Left ventricle myocardium inferior (tissue), 1 donor: ENCODE measurements at regions of chr6 and their contacts with region 1.

Region 1: DNA sequence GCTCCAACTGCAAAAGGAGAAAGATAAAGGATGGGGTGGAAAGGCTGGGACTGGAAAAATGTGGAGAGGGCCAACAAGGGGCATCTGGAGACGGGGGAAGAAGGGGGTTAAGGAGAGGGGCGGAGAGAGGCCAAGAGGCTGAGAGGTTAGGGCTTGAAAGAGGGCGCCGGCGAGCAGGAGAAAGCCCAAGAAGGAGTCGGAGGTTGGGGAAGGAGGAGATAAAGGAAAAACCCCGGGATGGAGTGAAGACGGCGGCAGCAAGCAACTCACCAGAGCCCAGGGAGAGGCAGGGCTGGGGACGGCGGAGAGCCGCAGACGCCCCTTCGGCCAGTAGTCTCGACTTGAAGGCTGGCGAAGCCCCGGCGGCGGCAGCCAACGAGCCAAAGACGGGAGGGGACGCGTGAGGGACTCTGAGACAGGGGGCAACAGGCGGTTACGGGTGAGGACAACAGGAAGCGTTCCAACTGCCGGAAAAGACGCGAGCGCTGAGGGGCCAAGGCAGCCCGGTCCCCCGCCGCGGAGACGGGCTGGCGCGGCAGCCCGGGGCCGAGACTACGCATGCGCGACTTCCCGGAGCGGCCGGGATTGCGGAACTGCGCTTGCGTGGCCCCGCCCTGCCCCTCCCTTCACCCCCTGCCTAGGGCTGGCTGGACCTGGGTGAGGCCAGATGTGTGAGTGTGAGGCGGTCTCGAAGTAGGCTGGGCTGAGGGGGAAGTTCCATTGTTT is at the start of gene STK38:
- DNase-seq: peak; percentile 93
- H3K4me3 ChIP-seq: peak within 1 kb of the TSS; percentile 99
- H3K27ac ChIP-seq: peak within 1 kb of the TSS; percentile 99
- H3K4me1 ChIP-seq: peaks cover 47% of the 10 kb centered on the region
- H3K27me3 ChIP-seq: no peaks in the 10 kb centered on the region
- CTCF ChIP-seq: peak; percentile 16
- total RNA-seq, gene STK38: 25.5 TPM

Region 2: GRCh38 chr6:36314221-36315014 is 232.7 kb before region 1 on chr6:
- intact Hi-C with region 1: no loop called
- DNase-seq: no peak
- H3K4me3 ChIP-seq: no peak overlapping the region
- H3K27ac ChIP-seq: no peak overlapping the region
- H3K4me1 ChIP-seq: no peaks in the 10 kb centered on the region
- H3K27me3 ChIP-seq: peaks cover 62% of the 10 kb centered on the region
- CTCF ChIP-seq: no peak

Region 3: GRCh38 chr6:36368921-36369865 is 177.9 kb before region 1 on chr6:
- intact Hi-C with region 1: no loop called
- DNase-seq: no peak
- H3K4me3 ChIP-seq: no peak overlapping the region
- H3K27ac ChIP-seq: no peak overlapping the region
- H3K4me1 ChIP-seq: no peaks in the 10 kb centered on the region
- H3K27me3 ChIP-seq: peaks cover 31% of the 10 kb centered on the region
- CTCF ChIP-seq: no peak

Region 4: DNA sequence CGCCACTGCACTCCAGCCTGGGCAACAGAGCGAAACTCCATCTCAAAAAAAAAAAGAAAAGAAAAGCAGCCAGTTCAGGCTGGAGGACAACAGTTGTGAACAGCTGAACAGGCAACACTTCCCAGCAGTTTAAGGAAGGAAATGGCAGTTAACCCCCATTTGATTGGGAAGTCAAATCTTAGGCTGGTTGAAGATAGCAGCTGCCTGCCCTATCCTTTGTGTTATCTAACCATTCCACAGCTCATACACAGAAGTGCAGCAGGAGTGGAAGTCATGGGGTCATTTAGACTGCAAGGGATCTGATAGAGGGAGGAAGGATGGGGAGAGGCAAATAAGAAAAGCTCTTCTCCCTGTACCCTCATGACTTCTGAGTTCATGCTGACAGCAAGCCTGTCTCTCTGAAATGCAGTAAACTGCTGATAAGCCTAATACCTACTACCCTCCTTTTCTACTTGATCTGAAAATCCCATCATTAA is 69.0 kb before region 1 on chr6:
- intact Hi-C with region 1: no loop called
- DNase-seq: no peak
- H3K4me3 ChIP-seq: no peak overlapping the region
- H3K27ac ChIP-seq: no peak overlapping the region
- H3K4me1 ChIP-seq: no peaks in the 10 kb centered on the region
- H3K27me3 ChIP-seq: no peaks in the 10 kb centered on the region
- CTCF ChIP-seq: no peak

Region 5: GRCh38 chr6:36594029-36594815 is 47.1 kb after region 1 on chr6 and contains the start of gene SRSF3:
- intact Hi-C with region 1: loop called (anchors 10 kb)
- DNase-seq: peak; percentile 96
- H3K4me3 ChIP-seq: peak within 1 kb of the TSS; percentile 79
- H3K27ac ChIP-seq: peak within 1 kb of the TSS; percentile 98
- H3K4me1 ChIP-seq: peaks cover 61% of the 10 kb centered on the region
- H3K27me3 ChIP-seq: no peaks in the 10 kb centered on the region
- CTCF ChIP-seq: peak; percentile 76
- total RNA-seq, gene SRSF3: 119 TPM

Region 6: GRCh38 chr6:36929607-36930006 is 382.5 kb after region 1 on chr6:
- intact Hi-C with region 1: no loop called
- DNase-seq: no peak
- H3K4me3 ChIP-seq: no peak overlapping the region
- H3K27ac ChIP-seq: peak overlapping the region; percentile 71
- H3K4me1 ChIP-seq: peaks cover 37% of the 10 kb centered on the region
- H3K27me3 ChIP-seq: no peaks in the 10 kb centered on the region
- CTCF ChIP-seq: no peak